Activated T-helper 1 cell treated with anti-CD3 and anti-CD28 coated beads, Interleukin-12 subunit alpha, Interleukin-12 subunit beta, Interleukin-2, Interleukin-4 antibody, amounts not matched to agents 30 ng/mL and 10 ng/mL and 1 ng/mL, durations not matched to agents 14 hours and 24 hours and 36 hours (primary cell): ENCODE measurements at regions of chr6 and their contacts with region 1.

Region 1: DNA sequence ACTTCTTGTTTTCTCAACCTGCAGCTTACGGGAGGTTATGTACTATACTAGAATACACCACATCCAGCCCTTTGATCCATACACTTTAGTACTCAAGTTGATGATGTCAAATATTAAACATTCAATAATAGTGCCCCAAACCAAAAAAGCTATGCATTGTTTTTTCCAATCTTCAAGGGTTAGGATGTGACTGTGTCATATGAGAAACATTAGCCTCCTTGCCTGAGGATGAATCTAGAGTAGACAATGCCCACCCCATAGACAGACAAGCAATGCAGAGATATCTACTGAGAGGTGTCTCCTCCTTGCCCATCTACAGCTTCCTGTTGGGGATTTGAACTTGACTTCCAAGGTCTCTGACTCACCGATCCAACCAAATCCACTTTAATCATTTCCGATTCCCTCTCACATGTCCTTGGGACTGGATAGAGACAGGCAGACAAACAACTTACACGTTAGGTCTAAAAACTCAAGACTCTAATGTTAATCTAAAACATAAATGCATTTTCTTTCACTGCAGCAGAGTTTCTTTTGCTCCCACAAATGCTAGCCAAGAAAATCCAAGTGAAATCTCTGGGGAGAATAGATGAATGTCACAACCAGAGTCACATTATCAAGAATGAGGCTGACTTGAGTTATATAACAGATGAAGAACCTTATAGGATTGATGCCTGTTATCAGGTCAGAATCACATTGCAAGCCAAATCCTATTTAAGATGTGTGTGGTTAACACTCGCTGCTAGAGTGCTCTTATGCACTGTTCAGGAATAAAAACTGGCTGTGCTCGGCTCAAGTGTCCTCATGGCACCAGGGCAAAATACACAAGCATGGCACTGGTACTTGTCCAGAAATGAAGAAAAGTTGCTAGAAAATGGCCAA is 75.5 kb upstream of the TNFAIP3 start:
- DNase-seq: no peak
- H3K4me3 Mint-ChIP-seq: peak overlapping the region; percentile 59
- H3K27ac Mint-ChIP-seq: peak overlapping the region; percentile 87
- H3K4me1 Mint-ChIP-seq: peaks cover 76% of the 10 kb centered on the region
- H3K27me3 Mint-ChIP-seq: no peaks in the 10 kb centered on the region

Region 2: DNA sequence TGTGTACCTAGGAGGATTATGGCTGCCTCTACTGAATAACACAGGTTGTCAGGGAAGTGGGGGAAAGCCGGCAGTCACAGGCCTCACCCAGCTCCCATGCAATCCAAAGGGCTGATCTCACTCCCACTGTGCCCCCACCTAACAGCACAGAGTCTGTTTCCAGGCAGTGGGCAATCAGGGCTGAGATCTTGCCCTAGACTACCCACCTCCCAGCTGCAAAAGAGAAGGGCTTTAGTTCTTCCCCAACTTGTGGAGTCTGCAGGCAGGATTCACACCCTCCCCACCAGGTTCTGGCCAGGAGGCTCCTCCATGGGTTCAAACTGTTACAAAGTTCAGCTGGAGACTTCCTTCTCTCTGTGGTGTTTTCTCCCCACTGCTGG is 231.3 kb before region 1 on chr6:
- intact Hi-C with region 1: no loop called
- DNase-seq: no peak
- H3K4me3 Mint-ChIP-seq: no peak overlapping the region
- H3K27ac Mint-ChIP-seq: no peak overlapping the region
- H3K4me1 Mint-ChIP-seq: peaks cover 17% of the 10 kb centered on the region
- H3K27me3 Mint-ChIP-seq: peaks cover 7% of the 10 kb centered on the region

Region 3: DNA sequence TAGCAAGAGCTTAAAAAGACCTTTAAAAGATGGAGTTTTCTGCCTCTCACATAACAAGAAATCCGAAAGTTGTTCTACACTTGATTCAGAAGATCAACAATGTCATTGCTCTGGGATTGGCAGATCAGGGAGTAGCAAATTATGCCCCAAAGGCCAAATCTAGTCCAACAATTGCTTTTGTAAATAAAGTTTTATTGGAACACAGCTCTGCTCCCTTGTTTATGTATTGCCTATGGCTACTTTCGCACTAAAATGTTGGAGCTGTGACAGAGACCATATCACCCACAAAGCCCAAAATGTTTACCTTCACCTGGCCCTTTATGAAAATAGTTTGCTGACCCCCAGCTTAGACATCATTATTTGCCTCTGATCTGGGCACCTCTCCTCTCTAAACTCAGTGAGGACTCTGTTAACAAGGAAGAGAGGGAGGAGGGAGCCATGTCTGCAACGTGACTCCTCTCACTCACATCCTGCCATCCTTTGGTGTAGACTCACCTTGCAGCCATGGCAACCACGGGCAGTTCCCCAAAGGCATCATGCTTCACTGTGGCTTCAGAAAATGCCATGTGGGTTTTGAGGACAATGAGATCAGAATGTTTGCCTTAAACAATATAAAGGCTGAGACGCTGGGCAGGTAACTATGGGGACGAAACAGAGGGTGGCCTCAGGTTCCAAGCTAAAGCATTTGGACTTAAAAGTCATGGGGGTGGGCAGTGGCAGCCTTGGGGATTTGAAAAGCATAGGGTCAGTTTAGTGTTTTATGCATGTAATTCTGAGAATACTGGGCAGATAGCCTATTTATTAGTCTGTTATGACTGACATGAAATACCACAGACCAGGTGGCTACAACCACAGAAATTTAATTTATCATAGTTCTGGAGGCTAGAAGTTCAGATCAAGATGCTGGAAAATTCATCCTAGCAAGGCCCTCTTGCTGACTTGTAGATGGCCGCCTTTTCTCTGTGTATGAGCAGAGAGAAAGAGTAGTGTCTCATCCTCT is 74.1 kb before region 1 on chr6:
- intact Hi-C with region 1: loop called (anchors 1 kb)
- DNase-seq: peak; percentile 81
- H3K4me3 Mint-ChIP-seq: peak overlapping the region; percentile 59
- H3K27ac Mint-ChIP-seq: peak overlapping the region; percentile 90
- H3K4me1 Mint-ChIP-seq: peaks cover 66% of the 10 kb centered on the region
- H3K27me3 Mint-ChIP-seq: peaks cover 5% of the 10 kb centered on the region

Region 4: GRCh38 chr6:137849181-137849980 is 57.9 kb after region 1 on chr6:
- intact Hi-C with region 1: loop called (anchors 1 kb)
- DNase-seq: no peak
- H3K4me3 Mint-ChIP-seq: no peak overlapping the region
- H3K27ac Mint-ChIP-seq: peak overlapping the region; percentile 53
- H3K4me1 Mint-ChIP-seq: peaks cover 23% of the 10 kb centered on the region
- H3K27me3 Mint-ChIP-seq: no peaks in the 10 kb centered on the region